ENCODE measurements at regions of chr16 and their contacts with region 1.

Region 1: GRCh38 chr16:87435372-87436224 is 43.5 kb downstream of the MAP1LC3B start:
- DNase-seq: no peak
- ATAC-seq: no peak
- H3K4me3 Mint-ChIP-seq: no peak overlapping the region
- H3K27ac Mint-ChIP-seq: no peak overlapping the region; the same call in 1 of the 2 replicates
- H3K4me1 Mint-ChIP-seq: peaks cover 12% of the 10 kb centered on the region
- H3K27me3 Mint-ChIP-seq: no peaks in the 10 kb centered on the region
- CTCF ChIP-seq: no peak

Region 2: GRCh38 chr16:87407511-87408112 is 28.0 kb before region 1 on chr16:
- CTCF ChIA-PET with region 1: no interaction called
- POLR2A ChIA-PET with region 1: no interaction called
- DNase-seq: no peak
- ATAC-seq: no peak
- H3K4me3 Mint-ChIP-seq: no peak overlapping the region
- H3K27ac Mint-ChIP-seq: peak overlapping the region; percentile 84; the same call in 1 of the 2 replicates
- H3K4me1 Mint-ChIP-seq: no peaks in the 10 kb centered on the region
- H3K27me3 Mint-ChIP-seq: no peaks in the 10 kb centered on the region
- CTCF ChIP-seq: no peak

Region 3: GRCh38 chr16:87461466-87461991 is 25.9 kb after region 1 on chr16:
- CTCF ChIA-PET with region 1: interaction called, 10 read pairs
- POLR2A ChIA-PET with region 1: no interaction called
- DNase-seq: peak; percentile 94
- ATAC-seq: peak; percentile 99
- H3K4me3 Mint-ChIP-seq: peak overlapping the region; percentile 54
- H3K27ac Mint-ChIP-seq: peak overlapping the region; percentile 80
- H3K4me1 Mint-ChIP-seq: peaks cover 30% of the 10 kb centered on the region
- H3K27me3 Mint-ChIP-seq: no peaks in the 10 kb centered on the region
- CTCF ChIP-seq: no peak

Region 4: GRCh38 chr16:87608400-87608985 is 172.9 kb after region 1 on chr16:
- CTCF ChIA-PET with region 1: no interaction called
- POLR2A ChIA-PET with region 1: no interaction called
- DNase-seq: peak; percentile 90
- ATAC-seq: peak; percentile 77
- H3K4me3 Mint-ChIP-seq: no peak overlapping the region
- H3K27ac Mint-ChIP-seq: no peak overlapping the region
- H3K4me1 Mint-ChIP-seq: peaks cover 24% of the 10 kb centered on the region
- H3K27me3 Mint-ChIP-seq: peaks cover 12% of the 10 kb centered on the region
- CTCF ChIP-seq: no peak

Region 5: GRCh38 chr16:87645802-87646201 is 210.2 kb after region 1 on chr16:
- CTCF ChIA-PET with region 1: no interaction called
- POLR2A ChIA-PET with region 1: no interaction called
- DNase-seq: no peak
- ATAC-seq: no peak
- H3K4me3 Mint-ChIP-seq: no peak overlapping the region
- H3K27ac Mint-ChIP-seq: no peak overlapping the region
- H3K4me1 Mint-ChIP-seq: 0 out of 2 replicates have a peak, but pooled peaks cover 4% of the 10 kb centered on the region
- H3K27me3 Mint-ChIP-seq: no peaks in the 10 kb centered on the region
- CTCF ChIP-seq: no peak